Ovary (tissue), 10 donors: ENCODE measurements at regions of chr4 and their contacts with region 1.

Region 1: DNA sequence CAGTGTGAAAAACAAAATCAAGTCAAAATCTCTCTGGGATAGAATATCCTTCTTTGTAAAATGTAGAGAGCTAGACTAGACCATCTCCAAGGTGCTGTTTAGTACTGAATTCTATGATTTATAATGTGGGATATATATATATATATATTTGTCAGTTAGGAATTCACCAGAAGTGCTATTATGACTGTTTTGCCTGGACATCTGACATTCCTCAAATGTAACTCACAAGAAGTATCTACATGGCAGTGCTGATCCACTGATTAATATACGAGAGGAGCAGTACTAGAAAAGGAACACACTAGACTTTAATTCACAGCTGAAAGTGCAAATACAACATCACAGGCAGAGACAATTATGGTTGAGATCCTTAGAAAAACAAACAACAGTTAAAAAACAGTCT is 208.9 kb downstream of the GBA3 start:
- DNase-seq: no peak
- H3K4me3 ChIP-seq: no peak overlapping the region
- H3K27ac ChIP-seq: no peak overlapping the region
- H3K4me1 ChIP-seq: no peaks in the 10 kb centered on the region
- H3K27me3 ChIP-seq: no peaks in the 10 kb centered on the region
- CTCF ChIP-seq: no peak
- EP300 ChIP-seq: no peak
- POLR2A ChIP-seq: no peak

Region 2: GRCh38 chr4:23966725-23967124 is 1065.1 kb after region 1 on chr4:
- intact Hi-C with region 1: loop called in 1 of 4 experiments (anchors 10 kb)
- DNase-seq: no peak
- H3K4me3 ChIP-seq: no peak overlapping the region
- H3K27ac ChIP-seq: no peak overlapping the region
- H3K4me1 ChIP-seq: no peaks in the 10 kb centered on the region
- H3K27me3 ChIP-seq: no peaks in the 10 kb centered on the region
- CTCF ChIP-seq: no peak
- EP300 ChIP-seq: no peak
- POLR2A ChIP-seq: no peak